CD4-positive, alpha-beta memory T cell (primary cell): ENCODE measurements at regions of chr6 and their contacts with region 1.

Region 1: GRCh38 chr6:75284632-75285286 is at the start of gene TMEM30A:
- DNase-seq: peak; percentile 93 to 98 (median 97)
- H3K4me3 ChIP-seq: peak within 1 kb of the TSS; percentile 70 to 86
- H3K4me3 Mint-ChIP-seq: no peak within 1 kb of the TSS
- H3K27ac ChIP-seq: peak within 1 kb of the TSS; percentile 79
- H3K27ac Mint-ChIP-seq: no peak within 1 kb of the TSS
- H3K4me1 ChIP-seq: peaks cover 63% of the 10 kb centered on the region
- H3K4me1 Mint-ChIP-seq: peaks cover 23 to 39% (median 35%) of the 10 kb centered on the region in 4 donors
- H3K27me3 ChIP-seq: no peaks in the 10 kb centered on the region
- H3K27me3 Mint-ChIP-seq: no peaks in the 10 kb centered on the region
- total RNA-seq, gene TMEM30A: 73.6 to 78.3 TPM

Region 2: GRCh38 chr6:75243333-75244062 is 41.3 kb before region 1 on chr6 and contains the start of gene COX7A2:
- CTCF ChIA-PET with region 1: interaction called, 13 read pairs
- POLR2A ChIA-PET with region 1: interaction called, 44 read pairs
- intact Hi-C with region 1: loop called (anchors 1 kb)
- DNase-seq: peak; percentile 84 to 92 (median 87)
- H3K4me3 ChIP-seq: peak within 1 kb of the TSS; percentile 90 to 93
- H3K4me3 Mint-ChIP-seq: peak within 1 kb of the TSS; percentile 96 to 99 (median 98)
- H3K27ac ChIP-seq: peak within 1 kb of the TSS; percentile 96
- H3K27ac Mint-ChIP-seq: peak within 1 kb of the TSS; percentile 91 to 100 (median 99)
- H3K4me1 ChIP-seq: peaks cover 24% of the 10 kb centered on the region
- H3K4me1 Mint-ChIP-seq: peaks cover 14 to 47% (median 24%) of the 10 kb centered on the region in 4 donors
- H3K27me3 ChIP-seq: no peaks in the 10 kb centered on the region
- H3K27me3 Mint-ChIP-seq: peaks cover 4 to 9% of the 10 kb centered on the region in 2 donors
- total RNA-seq, gene COX7A2: 188 to 201 TPM

Region 3: GRCh38 chr6:75266716-75267291 is 18.0 kb before region 1 on chr6:
- CTCF ChIA-PET with region 1: interaction called, 7 read pairs
- POLR2A ChIA-PET with region 1: interaction called, 6 read pairs
- intact Hi-C with region 1: loop called (anchors 2 kb)
- DNase-seq: peak in 4 of 5 donors; percentile 41 to 43 (median 41)
- H3K4me3 ChIP-seq: no peak overlapping the region
- H3K4me3 Mint-ChIP-seq: no peak overlapping the region
- H3K27ac ChIP-seq: no peak overlapping the region
- H3K27ac Mint-ChIP-seq: no peak overlapping the region
- H3K4me1 ChIP-seq: peaks cover 15% of the 10 kb centered on the region
- H3K4me1 Mint-ChIP-seq: peaks cover 29 to 48% (median 39%) of the 10 kb centered on the region in 4 donors
- H3K27me3 ChIP-seq: no peaks in the 10 kb centered on the region
- H3K27me3 Mint-ChIP-seq: no peaks in the 10 kb centered on the region

Region 4: DNA sequence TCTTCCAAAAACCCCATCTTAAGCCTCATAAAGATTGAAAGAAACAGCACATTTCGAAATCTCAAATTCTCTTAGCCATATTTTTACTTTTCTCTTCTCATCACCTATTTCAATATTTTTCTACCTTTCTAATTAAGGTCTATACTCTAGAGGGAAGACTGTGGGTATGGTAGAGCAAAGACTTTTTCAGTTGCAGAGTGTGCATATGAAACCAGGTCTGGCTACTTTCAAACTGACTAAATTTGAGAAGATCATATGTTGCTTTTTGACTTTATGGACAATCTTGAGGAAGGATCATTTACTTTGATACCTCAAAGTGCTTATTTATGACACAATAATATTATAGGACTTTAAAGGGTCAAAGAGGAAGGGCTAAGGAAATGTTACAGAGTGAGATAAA is 188.1 kb after region 1 on chr6:
- CTCF ChIA-PET with region 1: no interaction called
- POLR2A ChIA-PET with region 1: no interaction called
- intact Hi-C with region 1: no loop called
- DNase-seq: no peak
- H3K4me3 ChIP-seq: no peak overlapping the region
- H3K4me3 Mint-ChIP-seq: no peak overlapping the region
- H3K27ac ChIP-seq: no peak overlapping the region
- H3K27ac Mint-ChIP-seq: no peak overlapping the region
- H3K4me1 ChIP-seq: no peaks in the 10 kb centered on the region
- H3K4me1 Mint-ChIP-seq: no peaks in the 10 kb centered on the region
- H3K27me3 ChIP-seq: no peaks in the 10 kb centered on the region
- H3K27me3 Mint-ChIP-seq: peaks cover 4 to 6% of the 10 kb centered on the region in 2 donors

Region 5: DNA sequence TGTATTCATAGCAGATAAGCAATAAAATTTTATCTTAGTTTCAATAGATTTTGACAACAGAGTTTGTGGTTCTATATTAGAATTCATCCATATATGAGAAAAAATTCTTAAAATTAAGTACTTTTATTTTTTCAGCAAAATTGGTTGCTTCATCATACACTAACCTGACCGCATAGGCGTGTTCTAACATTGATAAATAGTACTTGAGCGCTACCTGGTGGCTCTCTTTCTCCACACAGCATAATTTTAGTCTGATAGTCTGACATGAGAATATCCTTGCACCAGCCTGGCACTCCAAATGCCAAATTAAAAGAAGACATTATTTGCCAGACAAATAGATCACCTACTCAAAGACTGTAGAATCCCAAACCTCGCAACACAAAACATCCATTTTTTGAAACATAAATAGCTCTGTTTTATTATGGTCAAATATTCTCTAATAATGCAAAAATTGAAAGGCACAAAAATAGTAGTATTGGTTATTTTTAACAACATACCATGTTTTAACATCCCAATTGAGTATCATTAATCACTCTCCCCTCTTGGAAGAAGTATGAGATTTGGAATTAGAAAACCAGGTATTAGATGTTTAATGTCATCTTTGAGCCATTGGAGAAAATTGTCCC is 241.9 kb after region 1 on chr6:
- CTCF ChIA-PET with region 1: interaction called, 3 read pairs
- POLR2A ChIA-PET with region 1: no interaction called
- intact Hi-C with region 1: loop called (anchors 5 kb)
- DNase-seq: peak; percentile 58 to 63 (median 58)
- H3K4me3 ChIP-seq: no peak overlapping the region
- H3K4me3 Mint-ChIP-seq: no peak overlapping the region
- H3K27ac ChIP-seq: no peak overlapping the region
- H3K27ac Mint-ChIP-seq: no peak overlapping the region
- H3K4me1 ChIP-seq: no peaks in the 10 kb centered on the region
- H3K4me1 Mint-ChIP-seq: no peaks in the 10 kb centered on the region
- H3K27me3 ChIP-seq: no peaks in the 10 kb centered on the region
- H3K27me3 Mint-ChIP-seq: peaks cover 18 to 19% of the 10 kb centered on the region in 2 donors

Region 6: DNA sequence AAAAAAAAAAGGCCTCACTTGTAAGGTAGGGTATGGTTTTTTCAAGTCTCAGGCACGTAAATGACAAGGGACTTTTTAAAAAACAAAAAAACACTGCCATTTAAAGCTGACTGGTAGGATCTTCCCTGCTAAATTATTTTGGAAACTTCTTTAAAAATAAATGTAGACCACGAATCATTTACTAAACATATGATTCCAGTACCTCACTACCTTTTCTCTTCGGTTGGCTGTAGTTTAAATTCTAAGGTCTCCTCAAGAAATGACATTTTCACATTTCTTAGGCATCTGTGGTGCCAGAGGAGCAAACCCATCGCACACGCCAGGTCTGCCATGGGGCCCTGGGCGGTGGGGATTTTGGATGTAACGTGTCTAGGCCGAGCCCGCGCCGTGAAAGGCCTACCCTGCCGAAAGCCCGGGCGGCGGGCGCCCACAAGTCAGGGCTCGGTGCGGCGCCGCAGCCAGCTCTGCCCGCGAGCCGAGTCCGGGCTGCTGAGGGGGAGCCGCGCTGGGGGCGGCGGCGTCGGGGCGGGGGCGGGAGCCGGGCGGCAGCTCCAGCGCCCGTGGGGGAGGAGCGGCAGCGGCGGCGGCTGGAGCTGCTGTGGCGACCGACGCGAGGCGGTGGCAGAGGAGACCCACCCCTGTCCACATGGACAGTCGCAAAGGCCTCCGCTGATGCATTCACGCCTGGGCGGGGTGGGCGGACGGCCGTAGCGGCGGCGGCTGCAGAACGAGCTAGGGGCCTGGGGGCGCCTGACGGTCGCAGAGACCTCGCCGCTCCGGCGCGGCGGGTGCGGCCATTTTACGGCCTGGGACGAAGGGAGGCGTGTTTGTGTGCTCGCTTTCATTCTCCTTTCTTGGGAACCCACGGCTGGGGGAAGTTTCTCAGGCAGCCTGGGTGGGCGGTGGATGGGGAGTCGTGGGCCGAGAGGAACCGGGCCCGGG is 316.8 kb after region 1 on chr6 and contains the start of gene SENP6:
- CTCF ChIA-PET with region 1: no interaction called
- POLR2A ChIA-PET with region 1: interaction called, 36 read pairs
- intact Hi-C with region 1: loop called (anchors 2 kb)
- DNase-seq: peak; percentile 78 to 84 (median 81)
- H3K4me3 ChIP-seq: peak within 1 kb of the TSS; percentile 55 to 83
- H3K4me3 Mint-ChIP-seq: peak within 1 kb of the TSS; percentile 95 to 100 (median 98)
- H3K27ac ChIP-seq: peak within 1 kb of the TSS; percentile 96
- H3K27ac Mint-ChIP-seq: peak within 1 kb of the TSS; percentile 97 to 100 (median 98)
- H3K4me1 ChIP-seq: peaks cover 52% of the 10 kb centered on the region
- H3K4me1 Mint-ChIP-seq: peaks cover 43 to 75% (median 60%) of the 10 kb centered on the region in 4 donors
- H3K27me3 ChIP-seq: no peaks in the 10 kb centered on the region
- H3K27me3 Mint-ChIP-seq: no peaks in the 10 kb centered on the region
- total RNA-seq, gene SENP6: 131 to 134 TPM

Region 7: DNA sequence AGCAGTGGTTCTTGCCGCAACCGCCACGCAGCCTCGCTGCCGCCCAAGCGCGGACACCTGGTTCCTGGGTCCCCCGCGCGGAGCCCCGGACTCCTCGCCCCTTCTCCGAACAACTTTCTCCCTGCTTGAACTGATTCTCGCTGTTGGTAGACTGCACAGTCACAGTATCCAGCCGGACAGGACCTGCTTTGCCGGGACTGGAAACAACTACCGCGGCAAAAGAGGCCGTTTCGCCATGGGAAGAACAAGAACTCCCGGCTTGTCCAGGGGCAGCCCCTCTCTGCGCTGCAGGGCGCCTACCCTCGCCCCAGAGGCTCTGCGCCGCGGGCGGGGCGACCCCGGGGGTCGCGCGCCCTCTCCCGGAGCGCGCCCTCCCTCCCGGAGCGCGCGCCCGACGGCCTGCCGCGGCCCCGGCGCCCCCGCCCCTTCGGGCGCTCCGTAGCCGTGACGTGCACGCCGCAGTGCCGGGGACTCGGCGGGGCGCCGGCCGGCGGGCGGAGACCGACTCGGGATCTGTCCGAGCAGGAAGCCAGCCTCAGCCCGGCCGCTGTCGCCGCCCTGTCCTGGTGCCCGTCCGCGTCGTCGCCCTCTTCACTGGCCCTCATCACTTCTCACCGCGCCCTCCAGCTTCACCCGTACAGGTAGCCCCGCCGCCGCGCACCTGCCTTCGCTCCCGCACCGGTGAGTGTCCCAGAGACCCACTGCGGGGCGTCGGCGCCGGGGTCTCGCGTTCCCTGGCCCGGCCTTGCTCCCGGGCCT is 464.2 kb after region 1 on chr6 and contains the start of gene MYO6:
- CTCF ChIA-PET with region 1: no interaction called
- POLR2A ChIA-PET with region 1: no interaction called
- intact Hi-C with region 1: loop called (anchors 10 kb)
- DNase-seq: peak; percentile 45 to 54 (median 50)
- H3K4me3 ChIP-seq: peak within 1 kb of the TSS; percentile 69 to 78
- H3K4me3 Mint-ChIP-seq: peak within 1 kb of the TSS; percentile 92 to 98 (median 96)
- H3K27ac ChIP-seq: peak within 1 kb of the TSS; percentile 38
- H3K27ac Mint-ChIP-seq: peak within 1 kb of the TSS; percentile 79 to 89 (median 85)
- H3K4me1 ChIP-seq: peaks cover 13% of the 10 kb centered on the region
- H3K4me1 Mint-ChIP-seq: peaks cover 5 to 14% (median 11%) of the 10 kb centered on the region in 4 donors
- H3K27me3 ChIP-seq: no peaks in the 10 kb centered on the region
- H3K27me3 Mint-ChIP-seq: peaks cover 10 to 21% of the 10 kb centered on the region in 2 donors
- total RNA-seq, gene MYO6: 4.1 to 4.4 TPM